Naive thymus-derived CD4-positive, alpha-beta T cell (primary cell): ENCODE measurements at regions of chr12 and their contacts with region 1.

Region 1: GRCh38 chr12:32455607-32456071 is 56.3 kb downstream of the FGD4 start:
- DNase-seq: peak in 6 of 9 donors; percentile 4 to 45 (median 32)
- ATAC-seq: peak; percentile 63
- H3K4me3 ChIP-seq: no peak overlapping the region
- H3K4me3 Mint-ChIP-seq: peak overlapping the region in 5 of 10 donors; percentile 16 to 55 (median 36)
- H3K27ac ChIP-seq: no peak overlapping the region
- H3K27ac Mint-ChIP-seq: no peak overlapping the region
- H3K4me1 ChIP-seq: no peaks in the 10 kb centered on the region
- H3K4me1 Mint-ChIP-seq: peaks cover 0 to 4% (median 0%) of the 10 kb centered on the region in 7 donors
- H3K27me3 ChIP-seq: no peaks in the 10 kb centered on the region
- H3K27me3 Mint-ChIP-seq: peaks cover 0 to 10% (median 0%) of the 10 kb centered on the region in 5 donors

Region 2: DNA sequence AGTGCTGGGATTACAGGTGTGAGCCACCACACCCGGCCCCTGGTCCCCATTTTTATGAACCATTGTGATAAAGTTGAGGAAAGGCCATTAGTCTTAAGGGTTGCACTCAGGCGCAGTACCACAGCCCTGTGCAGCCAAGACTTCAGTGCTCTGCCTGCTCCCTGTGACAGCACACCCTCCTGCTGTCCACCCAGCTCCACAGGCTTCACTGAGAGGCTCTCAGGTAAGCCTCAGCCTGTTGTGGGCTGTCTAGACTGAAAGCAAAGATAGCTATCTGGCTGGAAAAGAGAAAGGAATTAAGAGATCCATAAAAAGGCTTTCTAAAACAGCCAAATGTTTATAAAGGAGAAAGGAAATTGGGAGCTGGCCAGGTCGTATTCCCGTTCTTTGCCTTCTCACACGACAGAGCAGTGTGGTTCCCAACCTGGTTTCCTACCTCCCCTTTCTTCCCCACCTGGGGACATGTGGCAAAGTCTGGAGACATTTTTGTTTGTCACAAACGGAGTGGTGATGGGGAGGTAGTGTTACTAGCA is 204.3 kb after region 1 on chr12:
- CTCF ChIA-PET with region 1: interaction called, 3 read pairs
- POLR2A ChIA-PET with region 1: no interaction called
- intact Hi-C with region 1: loop called in 1 of 2 experiments (anchors 1 kb)
- DNase-seq: no peak
- ATAC-seq: no peak
- H3K4me3 ChIP-seq: no peak overlapping the region
- H3K4me3 Mint-ChIP-seq: no peak overlapping the region
- H3K27ac ChIP-seq: no peak overlapping the region
- H3K27ac Mint-ChIP-seq: no peak overlapping the region
- H3K4me1 ChIP-seq: no peaks in the 10 kb centered on the region
- H3K4me1 Mint-ChIP-seq: peaks cover 0 to 8% (median 0%) of the 10 kb centered on the region in 7 donors
- H3K27me3 ChIP-seq: no peaks in the 10 kb centered on the region
- H3K27me3 Mint-ChIP-seq: no peaks in the 10 kb centered on the region

Region 3: GRCh38 chr12:32671930-32672780 is 216.5 kb after region 1 on chr12:
- CTCF ChIA-PET with region 1: no interaction called
- POLR2A ChIA-PET with region 1: no interaction called
- intact Hi-C with region 1: loop called in 1 of 2 experiments (anchors 1 kb)
- DNase-seq: no peak
- ATAC-seq: no peak
- H3K4me3 ChIP-seq: no peak overlapping the region
- H3K4me3 Mint-ChIP-seq: no peak overlapping the region
- H3K27ac ChIP-seq: no peak overlapping the region
- H3K27ac Mint-ChIP-seq: no peak overlapping the region
- H3K4me1 ChIP-seq: no peaks in the 10 kb centered on the region
- H3K4me1 Mint-ChIP-seq: peaks cover 0 to 3% (median 0%) of the 10 kb centered on the region in 7 donors
- H3K27me3 ChIP-seq: no peaks in the 10 kb centered on the region
- H3K27me3 Mint-ChIP-seq: peaks cover 0 to 4% (median 0%) of the 10 kb centered on the region in 5 donors

Region 4: GRCh38 chr12:34022079-34022830 is 1566.6 kb after region 1 on chr12 and contains the start of gene ALG10:
- CTCF ChIA-PET with region 1: no interaction called
- POLR2A ChIA-PET with region 1: no interaction called
- intact Hi-C with region 1: loop called (anchors 1 kb)
- DNase-seq: peak; percentile 88 to 98 (median 96)
- ATAC-seq: peak; percentile 98
- H3K4me3 ChIP-seq: peak within 1 kb of the TSS; percentile 87
- H3K4me3 Mint-ChIP-seq: peak within 1 kb of the TSS; percentile 93 to 99 (median 96)
- H3K27ac ChIP-seq: peak within 1 kb of the TSS; percentile 94
- H3K27ac Mint-ChIP-seq: peak within 1 kb of the TSS; percentile 95 to 99 (median 98)
- H3K4me1 ChIP-seq: peaks cover 4 to 8% of the 10 kb centered on the region in 2 donors
- H3K4me1 Mint-ChIP-seq: peaks cover 6 to 42% (median 30%) of the 10 kb centered on the region in 7 donors
- H3K27me3 ChIP-seq: no peaks in the 10 kb centered on the region
- H3K27me3 Mint-ChIP-seq: no peaks in the 10 kb centered on the region
- total RNA-seq, gene ALG10: 10.2 to 21.6 (median 17.5) TPM

Region 5: DNA sequence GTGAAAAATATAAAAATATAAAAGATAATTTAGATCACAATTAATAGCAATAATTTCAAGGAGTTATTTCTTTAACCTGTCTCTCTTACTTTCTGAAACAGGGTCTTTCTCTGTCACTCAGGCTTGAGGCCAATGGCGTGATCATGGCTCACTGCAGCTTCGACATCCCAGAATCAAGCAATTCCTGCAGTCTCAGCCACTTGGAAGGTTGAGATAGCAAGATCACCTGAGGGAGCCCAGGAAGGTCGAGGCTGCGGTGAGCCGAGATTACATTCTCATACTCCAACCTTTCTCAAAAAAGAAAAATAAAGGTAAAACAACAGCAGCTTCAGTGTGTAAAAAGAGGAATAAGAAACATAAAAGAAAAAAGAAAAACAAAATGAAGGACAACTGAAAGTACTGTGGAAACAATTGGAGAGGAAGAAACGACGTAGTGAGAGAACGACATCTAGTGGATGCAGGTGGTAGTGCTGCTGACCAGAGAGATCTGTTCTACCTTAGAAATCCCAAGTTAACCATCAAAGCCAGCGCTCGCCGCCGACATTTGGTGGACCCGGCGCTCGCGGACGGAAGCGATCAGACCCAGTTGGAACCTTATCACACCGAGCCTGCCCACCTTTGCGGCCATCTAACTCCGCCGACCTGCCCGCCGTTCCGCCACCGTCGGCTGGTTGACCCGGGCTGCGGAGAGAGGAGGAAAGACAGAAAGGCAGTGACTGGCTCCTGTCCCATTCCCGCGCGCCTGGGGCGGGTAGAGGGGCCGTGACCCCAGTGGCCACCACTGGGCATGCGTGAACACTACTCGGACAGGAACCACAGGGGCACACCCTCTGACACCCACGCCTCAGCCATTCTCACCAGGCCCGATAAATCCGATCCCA is 1762.8 kb after region 1 on chr12:
- CTCF ChIA-PET with region 1: no interaction called
- POLR2A ChIA-PET with region 1: no interaction called
- intact Hi-C with region 1: loop called in 1 of 2 experiments (anchors 1 kb)
- DNase-seq: peak; percentile 14 to 61 (median 50)
- ATAC-seq: peak; percentile 90
- H3K4me3 ChIP-seq: peak overlapping the region; percentile 47
- H3K4me3 Mint-ChIP-seq: peak overlapping the region; percentile 76 to 95 (median 89)
- H3K27ac ChIP-seq: no peak overlapping the region
- H3K27ac Mint-ChIP-seq: peak overlapping the region in 6 of 9 donors; percentile 26 to 79 (median 74)
- H3K4me1 ChIP-seq: no peaks in the 10 kb centered on the region
- H3K4me1 Mint-ChIP-seq: peaks cover 4 to 18% (median 11%) of the 10 kb centered on the region in 7 donors
- H3K27me3 ChIP-seq: peaks cover 0 to 4% of the 10 kb centered on the region in 2 donors
- H3K27me3 Mint-ChIP-seq: peaks cover 2 to 17% (median 11%) of the 10 kb centered on the region in 5 donors